OCI-LY7 (cell line): ENCODE measurements at regions of chr7 and their contacts with region 1.

Region 1: DNA sequence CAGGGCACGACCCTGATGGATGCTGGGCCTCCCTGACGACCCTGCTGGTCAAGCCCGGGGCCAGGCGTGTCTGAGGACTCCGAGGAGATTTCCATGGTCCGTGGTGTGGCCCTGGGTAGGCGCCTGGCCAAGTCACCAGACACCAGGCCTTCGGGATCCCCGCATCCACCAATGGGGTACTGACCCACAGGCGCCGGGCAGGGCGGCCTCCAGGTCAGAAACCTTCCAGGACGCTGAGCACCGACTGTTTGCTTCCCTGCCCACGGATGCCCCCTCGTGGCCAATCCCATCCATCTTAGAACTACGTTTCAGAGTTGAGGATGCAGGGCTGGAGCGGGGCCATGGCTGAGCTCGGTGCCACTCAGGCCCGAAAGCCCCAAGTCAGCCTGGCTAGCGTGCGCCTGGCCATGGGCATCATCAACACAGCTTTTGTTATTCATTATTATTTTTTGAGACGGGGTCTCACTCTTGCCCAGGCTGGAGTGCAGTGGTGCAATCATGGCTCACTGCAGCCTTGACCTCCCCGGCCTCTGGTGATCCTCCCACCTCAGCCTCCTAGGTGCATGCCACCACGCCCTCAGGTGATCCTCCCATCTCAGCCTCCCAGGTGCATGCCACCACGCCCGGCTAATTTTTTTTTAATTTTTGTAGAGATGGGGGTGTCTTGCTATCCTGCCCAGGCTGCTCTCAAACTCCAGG is 7.1 kb upstream of the AMZ1 start:
- DNase-seq: peak; percentile 62
- H3K4me3 ChIP-seq: no peak overlapping the region
- H3K27ac ChIP-seq: no peak overlapping the region
- H3K4me1 ChIP-seq: no peaks in the 10 kb centered on the region
- CTCF ChIP-seq: peak; percentile 80

Region 2: GRCh38 chr7:2451171-2452073 is 229.5 kb before region 1 on chr7:
- CTCF ChIA-PET with region 1: no interaction called
- POLR2A ChIA-PET with region 1: no interaction called
- intact Hi-C with region 1: loop called (anchors 1 kb)
- DNase-seq: peak; percentile 71
- H3K4me3 ChIP-seq: no peak overlapping the region
- H3K27ac ChIP-seq: no peak overlapping the region
- H3K4me1 ChIP-seq: no peaks in the 10 kb centered on the region
- CTCF ChIP-seq: peak; percentile 81

Region 3: DNA sequence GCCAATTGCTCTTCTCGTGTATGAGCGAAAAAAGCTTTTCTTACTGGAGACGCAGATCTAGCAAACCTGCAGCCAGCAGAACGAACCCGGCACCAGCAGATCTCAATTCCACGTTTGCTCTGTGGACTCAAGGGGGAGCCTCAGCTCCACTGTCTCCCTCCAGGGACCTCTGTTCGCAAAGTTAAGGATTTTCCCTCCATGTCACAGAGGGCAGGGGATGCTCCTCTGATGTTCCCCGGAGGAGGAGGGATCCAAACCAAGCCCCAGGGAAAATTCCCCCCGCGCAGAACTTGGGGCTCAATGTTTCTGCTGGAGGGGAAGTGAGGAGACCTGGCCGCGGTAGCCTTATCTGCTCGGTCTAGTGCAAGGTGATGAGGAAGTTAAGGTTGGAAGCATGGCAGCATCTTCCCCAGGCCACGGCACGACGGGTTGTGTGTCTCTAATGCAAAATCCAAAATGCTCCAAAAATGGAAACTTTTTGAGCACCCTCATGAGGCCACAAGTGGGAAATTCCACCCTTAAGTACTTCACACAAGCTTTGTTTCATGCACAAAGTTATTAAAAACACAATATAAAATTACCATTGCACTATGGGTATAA is 113.2 kb before region 1 on chr7:
- CTCF ChIA-PET with region 1: no interaction called
- POLR2A ChIA-PET with region 1: no interaction called
- intact Hi-C with region 1: loop called (anchors 1 kb)
- DNase-seq: peak; percentile 40
- H3K4me3 ChIP-seq: no peak overlapping the region
- H3K27ac ChIP-seq: no peak overlapping the region
- H3K4me1 ChIP-seq: peaks cover 4% of the 10 kb centered on the region
- CTCF ChIP-seq: peak; percentile 71

Region 4: DNA sequence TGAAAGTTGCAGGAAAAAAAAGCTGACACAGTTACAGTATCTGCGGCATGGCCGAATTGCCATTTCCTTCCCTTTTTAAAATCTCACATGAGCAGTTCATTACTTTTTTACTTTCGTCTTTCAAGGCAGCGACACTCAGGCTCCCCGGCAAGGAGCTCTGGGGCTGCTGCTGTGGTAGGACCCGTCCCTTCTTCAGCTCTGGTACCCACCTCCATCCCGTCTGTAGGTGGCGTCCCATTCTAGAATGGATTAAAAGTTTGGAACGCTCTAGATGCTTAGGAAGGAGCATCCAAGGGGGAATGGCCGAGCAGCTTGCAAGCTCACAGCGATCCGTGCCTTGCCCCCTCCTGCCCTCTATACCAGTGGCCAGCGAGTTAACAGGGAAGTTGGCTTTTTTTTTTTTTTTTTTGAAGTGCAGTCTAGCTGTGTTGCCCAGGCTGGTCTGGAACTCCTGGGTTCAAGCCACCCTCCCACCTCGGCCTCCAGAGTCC is 72.0 kb before region 1 on chr7:
- CTCF ChIA-PET with region 1: no interaction called
- POLR2A ChIA-PET with region 1: no interaction called
- intact Hi-C with region 1: loop called (anchors 2 kb)
- DNase-seq: peak; percentile 48
- H3K4me3 ChIP-seq: no peak overlapping the region
- H3K27ac ChIP-seq: no peak overlapping the region
- H3K4me1 ChIP-seq: peaks cover 17% of the 10 kb centered on the region
- CTCF ChIP-seq: peak; percentile 72

Region 5: DNA sequence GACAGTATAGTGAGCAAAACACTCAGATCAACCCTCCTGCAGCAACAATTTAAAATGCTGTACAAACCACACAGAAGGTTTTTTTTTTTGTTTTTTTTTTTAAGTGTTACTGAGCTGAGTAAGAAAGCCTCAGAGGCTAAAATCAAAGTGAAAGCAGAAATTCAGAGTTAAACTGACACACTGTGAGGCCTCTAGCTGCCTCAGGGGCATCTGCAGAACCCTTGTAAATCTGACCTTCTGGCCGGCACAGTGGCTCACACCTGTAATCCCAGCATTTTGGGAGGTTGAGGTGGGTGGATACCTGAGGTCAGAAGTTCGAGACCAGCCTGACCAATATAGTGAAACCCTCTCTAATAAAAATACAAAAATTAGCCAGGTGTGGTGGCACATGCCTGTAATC is 170.6 kb after region 1 on chr7:
- CTCF ChIA-PET with region 1: no interaction called
- POLR2A ChIA-PET with region 1: no interaction called
- intact Hi-C with region 1: no loop called
- DNase-seq: no peak
- H3K4me3 ChIP-seq: no peak overlapping the region
- H3K27ac ChIP-seq: no peak overlapping the region
- H3K4me1 ChIP-seq: no peaks in the 10 kb centered on the region
- CTCF ChIP-seq: no peak